ENCODE measurements at regions of chr17 and their contacts with region 1.

Region 1: DNA sequence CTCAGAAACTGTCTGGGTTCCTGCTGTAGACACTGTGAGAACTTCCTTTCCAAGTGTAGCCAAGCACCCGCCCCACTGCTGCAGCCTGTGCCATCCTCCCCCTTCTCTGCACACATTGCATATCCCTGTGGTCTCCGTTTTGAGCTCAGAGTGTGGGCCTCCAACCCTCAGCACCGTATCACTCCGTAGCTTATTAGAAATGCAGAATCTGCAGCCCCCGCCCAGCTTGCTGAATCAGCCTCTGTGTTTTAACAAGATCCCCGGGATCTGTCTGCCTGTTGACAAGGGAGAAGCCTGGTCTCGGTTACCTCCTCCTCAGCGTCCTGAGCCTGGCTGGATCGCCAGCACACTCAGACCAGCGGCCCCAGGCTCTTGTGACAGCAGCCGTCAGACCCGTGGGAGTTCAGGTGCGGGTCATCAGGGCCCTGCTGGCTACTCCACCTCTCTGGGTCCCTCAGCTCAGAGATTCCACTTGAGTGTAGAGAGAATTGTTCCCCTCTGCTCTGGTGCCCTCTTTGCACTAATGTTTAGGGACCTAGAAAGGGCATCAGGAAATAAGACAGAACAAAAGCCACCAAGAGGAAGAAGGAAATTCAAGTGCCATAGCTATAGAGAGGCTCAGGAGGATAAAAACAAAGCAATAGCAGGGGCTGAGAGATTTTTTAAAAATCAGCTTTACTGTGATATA is 92.3 kb downstream of the PITPNC1 start:
- DNase-seq: peak; percentile 55
- ATAC-seq: peak; percentile 70
- H3K4me3 Mint-ChIP-seq: peak overlapping the region; percentile 64
- H3K27ac Mint-ChIP-seq: peak overlapping the region; percentile 92
- H3K4me1 Mint-ChIP-seq: peaks cover 74% of the 10 kb centered on the region
- H3K27me3 Mint-ChIP-seq: no peaks in the 10 kb centered on the region

Region 2: GRCh38 chr17:67390646-67391384 is 78.5 kb before region 1 on chr17:
- CTCF ChIA-PET with region 1: interaction called, 181 read pairs
- POLR2A ChIA-PET with region 1: interaction called, 24 read pairs
- DNase-seq: peak; percentile 82
- ATAC-seq: peak; percentile 91
- H3K4me3 Mint-ChIP-seq: peak overlapping the region; percentile 71
- H3K27ac Mint-ChIP-seq: peak overlapping the region; percentile 93
- H3K4me1 Mint-ChIP-seq: peaks cover 69% of the 10 kb centered on the region
- H3K27me3 Mint-ChIP-seq: no peaks in the 10 kb centered on the region

Region 3: DNA sequence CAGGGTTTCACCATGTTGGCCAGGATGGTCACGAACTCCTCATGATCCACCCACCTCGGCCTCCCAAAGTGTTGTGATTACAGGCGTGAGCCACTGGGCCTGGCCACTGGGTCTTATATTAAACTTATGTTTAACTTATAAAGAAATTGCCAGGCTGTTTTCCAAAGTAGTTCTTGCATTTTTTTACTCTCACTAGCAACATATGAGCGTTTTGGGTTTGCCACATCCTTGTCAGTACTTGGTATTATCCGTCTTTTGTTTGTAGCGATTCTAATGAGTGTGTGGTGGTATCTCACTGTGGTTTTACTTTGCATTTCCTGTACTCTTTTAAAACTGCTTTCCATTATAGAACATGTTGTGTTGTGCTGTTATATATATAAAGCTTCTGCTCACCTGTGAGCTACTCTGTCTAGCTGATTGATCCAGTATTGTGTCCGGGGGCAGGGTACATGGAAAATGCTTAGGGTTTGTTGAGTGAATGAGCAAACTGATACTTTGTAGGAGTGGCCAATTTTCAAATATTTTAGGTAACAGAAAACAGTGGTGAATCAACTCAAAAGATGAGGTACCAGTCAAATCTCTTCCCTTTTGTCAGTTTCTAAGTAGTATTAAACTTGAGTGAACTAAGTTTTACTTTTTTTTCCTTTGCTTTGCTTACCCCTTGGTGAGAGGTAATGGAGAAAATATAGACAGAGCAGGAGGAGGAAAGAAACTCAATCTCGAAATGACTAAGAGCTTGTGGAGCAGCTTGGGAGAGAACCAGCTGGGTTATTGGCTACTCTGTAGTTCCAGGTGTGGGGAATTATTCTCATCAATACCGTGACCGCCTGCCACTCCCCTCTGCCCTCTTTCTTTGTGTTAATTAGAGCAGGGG is 16.4 kb before region 1 on chr17:
- CTCF ChIA-PET with region 1: interaction called, 57 read pairs
- POLR2A ChIA-PET with region 1: interaction called, 31 read pairs
- DNase-seq: peak; percentile 68
- ATAC-seq: peak; percentile 84
- H3K4me3 Mint-ChIP-seq: peak overlapping the region; percentile 67
- H3K27ac Mint-ChIP-seq: peak overlapping the region; percentile 96
- H3K4me1 Mint-ChIP-seq: peaks cover 88% of the 10 kb centered on the region
- H3K27me3 Mint-ChIP-seq: no peaks in the 10 kb centered on the region

Measured in activated CD8-positive, alpha-beta T cell treated with anti-CD3 and anti-CD28 coated beads, Interleukin-2, amount 10 ng/mL, durations not matched to agents 7 days and 5 days (primary cell).